HepG2 (cell line): ENCODE measurements at regions of chrX and their contacts with region 1.

Region 1: GRCh38 chrX:111168314-111168713 is 72.3 kb downstream of the PAK3 start:
- DNase-seq: peak; percentile 0
- ATAC-seq: no peak
- H3K4me3 ChIP-seq: no peak overlapping the region
- H3K27ac ChIP-seq: no peak overlapping the region
- H3K4me1 ChIP-seq: no peaks in the 10 kb centered on the region
- H3K27me3 ChIP-seq: no peaks in the 10 kb centered on the region
- CTCF ChIP-seq: 0 out of 2 replicates have a peak, but pooled peaks have one; percentile 17
- EP300 ChIP-seq: no peak
- POLR2A ChIP-seq: no peak
- RAD21 ChIP-seq: no peak

Region 2: DNA sequence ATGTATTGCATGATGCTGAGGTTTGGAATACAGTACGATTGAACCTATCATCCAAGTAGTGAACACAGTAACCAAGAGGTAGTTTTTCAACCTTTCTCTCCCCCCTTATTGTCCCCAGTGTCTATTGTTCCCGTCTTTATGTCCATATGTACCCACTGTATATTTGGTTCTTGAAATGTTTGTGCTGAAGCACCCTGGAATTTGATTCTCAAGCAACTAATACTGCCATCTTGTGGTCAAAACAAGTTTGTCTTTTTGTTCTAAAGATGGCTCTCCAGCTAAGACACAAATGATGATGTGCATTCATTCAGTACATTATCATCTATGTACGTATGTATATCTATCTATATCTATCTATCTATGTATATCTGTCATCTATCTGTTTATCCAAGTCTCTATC is 277.2 kb after region 1 on chrX:
- CTCF ChIA-PET with region 1: no interaction called
- POLR2A ChIA-PET with region 1: no interaction called
- in situ Hi-C with region 1: loop called (anchors 25 kb)
- intact Hi-C with region 1: loop called (anchors 2 kb)
- DNase-seq: peak; percentile 21
- ATAC-seq: no peak
- H3K4me3 ChIP-seq: no peak overlapping the region
- H3K27ac ChIP-seq: no peak overlapping the region
- H3K4me1 ChIP-seq: no peaks in the 10 kb centered on the region
- H3K27me3 ChIP-seq: no peaks in the 10 kb centered on the region
- CTCF ChIP-seq: peak; percentile 51
- EP300 ChIP-seq: no peak
- POLR2A ChIP-seq: no peak
- RAD21 ChIP-seq: no peak